Lower leg skin (tissue), 4 donors: ENCODE measurements at regions of chr16 and their contacts with region 1.

Region 1: GRCh38 chr16:80122115-80122514 is 418.7 kb upstream of the DYNLRB2 start:
- DNase-seq: peak; percentile 71 to 87
- H3K4me3 ChIP-seq: no peak overlapping the region
- CTCF ChIP-seq: no peak
- POLR2A ChIP-seq: no peak

Region 2: GRCh38 chr16:78925083-78925767 is 1196.9 kb before region 1 on chr16:
- intact Hi-C with region 1: loop called (anchors 10 kb)
- DNase-seq: peak in 1 of 2 donors; percentile 63
- H3K4me3 ChIP-seq: no peak overlapping the region
- CTCF ChIP-seq: no peak
- POLR2A ChIP-seq: no peak